ENCODE measurements at regions of chr3 and their contacts with region 1.

Region 1: GRCh38 chr3:114383875-114384557 is 90.2 kb downstream of the TIGIT start:
- DNase-seq: peak; percentile 61
- H3K4me3 ChIP-seq: no peak overlapping the region; a peak in 1 of 4 replicates
- H3K27ac ChIP-seq: peak overlapping the region; percentile 8 to 37; a peak in 1 of 4 replicates
- H3K4me1 ChIP-seq: peaks cover 7 to 16% of the 10 kb centered on the region in 2 experiments; a peak in 2 of 4 replicates
- H3K27me3 ChIP-seq: no peaks in the 10 kb centered on the region
- CTCF ChIP-seq: peak; percentile 96
- EP300 ChIP-seq: no peak
- RAD21 ChIP-seq: peak; percentile 97

Region 2: DNA sequence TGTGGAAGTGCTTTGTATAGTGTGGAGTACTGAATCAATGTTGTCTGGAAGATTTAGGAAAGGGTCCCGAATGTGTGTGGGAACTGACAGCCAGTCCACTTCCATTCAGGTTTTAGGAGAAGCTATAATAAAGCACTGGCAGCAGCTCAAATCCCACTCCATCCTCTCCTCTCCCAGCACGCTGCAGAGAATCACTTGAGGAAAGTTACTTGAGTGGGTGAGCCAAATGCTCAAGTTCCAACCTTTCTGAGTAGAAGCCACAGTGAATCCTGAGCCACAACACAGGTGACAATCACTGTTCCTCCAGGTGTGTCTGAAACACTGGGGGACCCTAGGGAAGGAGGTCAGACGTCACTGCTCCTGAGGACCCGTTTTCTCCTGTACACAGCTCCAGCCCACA is 16.4 kb after region 1 on chr3:
- CTCF ChIA-PET with region 1: interaction called, 56 read pairs
- POLR2A ChIA-PET with region 1: no interaction called
- DNase-seq: no peak
- H3K4me3 ChIP-seq: peak overlapping the region in 1 of 2 experiments; percentile 35; a peak in 2 of 4 replicates
- H3K27ac ChIP-seq: peak overlapping the region; percentile 62 to 73
- H3K4me1 ChIP-seq: peaks cover 12 to 19% of the 10 kb centered on the region in 2 experiments; a peak in 3 of 4 replicates
- H3K27me3 ChIP-seq: no peaks in the 10 kb centered on the region
- CTCF ChIP-seq: no peak
- EP300 ChIP-seq: no peak
- RAD21 ChIP-seq: no peak

Region 3: DNA sequence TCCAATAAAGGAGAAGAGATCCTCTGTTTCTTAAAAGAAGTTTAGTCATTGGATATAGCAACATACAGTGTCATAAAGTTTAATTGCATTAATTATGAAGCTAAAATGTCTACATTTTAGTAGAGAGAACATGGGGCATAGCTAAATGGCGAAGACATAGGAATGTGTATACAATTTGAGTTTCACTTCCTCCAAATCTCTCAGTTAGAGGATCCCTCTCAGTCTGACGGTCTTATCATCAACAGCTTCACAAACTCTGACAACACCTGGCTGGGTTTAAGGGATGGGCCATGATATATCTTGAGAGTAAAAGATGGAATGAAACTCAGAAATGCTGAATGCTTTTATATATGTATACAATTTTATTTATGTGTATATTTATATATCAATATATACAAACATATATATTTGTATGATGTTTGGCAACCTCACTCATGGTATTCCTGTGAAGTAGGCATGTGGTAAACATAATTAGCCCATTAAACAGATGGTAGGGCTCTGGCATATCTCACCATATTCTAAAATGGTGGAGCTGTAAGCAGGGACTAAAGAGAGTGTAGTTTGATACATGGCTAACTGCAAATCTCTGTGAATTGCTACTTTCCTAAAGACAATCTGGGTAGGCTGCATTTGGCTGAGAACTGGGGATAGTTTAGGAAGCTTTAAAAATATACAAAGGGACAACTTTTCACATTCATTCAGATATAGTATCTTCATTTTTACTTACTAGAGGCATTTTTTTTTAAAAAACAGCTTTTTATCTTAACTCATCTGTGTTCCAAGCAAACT is 21.4 kb after region 1 on chr3:
- CTCF ChIA-PET with region 1: interaction called, 56 read pairs
- POLR2A ChIA-PET with region 1: no interaction called
- DNase-seq: no peak
- H3K4me3 ChIP-seq: no peak overlapping the region
- H3K27ac ChIP-seq: peak overlapping the region in 1 of 2 experiments; percentile 46; a peak in 1 of 4 replicates
- H3K4me1 ChIP-seq: peaks cover 19 to 27% of the 10 kb centered on the region in 2 experiments; a peak in 3 of 4 replicates
- H3K27me3 ChIP-seq: no peaks in the 10 kb centered on the region
- CTCF ChIP-seq: no peak
- EP300 ChIP-seq: no peak
- RAD21 ChIP-seq: no peak

Region 4: GRCh38 chr3:114411811-114412803 is 28.1 kb after region 1 on chr3:
- CTCF ChIA-PET with region 1: interaction called, 248 read pairs
- POLR2A ChIA-PET with region 1: no interaction called
- DNase-seq: no peak
- H3K4me3 ChIP-seq: no peak overlapping the region
- H3K27ac ChIP-seq: peak overlapping the region in 1 of 2 experiments; percentile 2; a peak in 1 of 4 replicates
- H3K4me1 ChIP-seq: peaks cover 21 to 24% of the 10 kb centered on the region in 2 experiments; a peak in 3 of 4 replicates
- H3K27me3 ChIP-seq: no peaks in the 10 kb centered on the region
- CTCF ChIP-seq: peak; percentile 25
- EP300 ChIP-seq: no peak
- RAD21 ChIP-seq: no peak

Region 5: GRCh38 chr3:115226844-115227445 is 842.9 kb after region 1 on chr3:
- CTCF ChIA-PET with region 1: no interaction called
- POLR2A ChIA-PET with region 1: no interaction called
- DNase-seq: no peak
- H3K4me3 ChIP-seq: no peak overlapping the region
- H3K27ac ChIP-seq: peak overlapping the region in 1 of 2 experiments; percentile 77; a peak in 2 of 4 replicates
- H3K4me1 ChIP-seq: peaks cover 0 to 7% of the 10 kb centered on the region in 2 experiments; a peak in 1 of 4 replicates
- H3K27me3 ChIP-seq: no peaks in the 10 kb centered on the region
- CTCF ChIP-seq: no peak
- EP300 ChIP-seq: no peak
- RAD21 ChIP-seq: no peak